HEK293T (cell line): ENCODE measurements at regions of chr9 and their contacts with region 1.

Region 1: DNA sequence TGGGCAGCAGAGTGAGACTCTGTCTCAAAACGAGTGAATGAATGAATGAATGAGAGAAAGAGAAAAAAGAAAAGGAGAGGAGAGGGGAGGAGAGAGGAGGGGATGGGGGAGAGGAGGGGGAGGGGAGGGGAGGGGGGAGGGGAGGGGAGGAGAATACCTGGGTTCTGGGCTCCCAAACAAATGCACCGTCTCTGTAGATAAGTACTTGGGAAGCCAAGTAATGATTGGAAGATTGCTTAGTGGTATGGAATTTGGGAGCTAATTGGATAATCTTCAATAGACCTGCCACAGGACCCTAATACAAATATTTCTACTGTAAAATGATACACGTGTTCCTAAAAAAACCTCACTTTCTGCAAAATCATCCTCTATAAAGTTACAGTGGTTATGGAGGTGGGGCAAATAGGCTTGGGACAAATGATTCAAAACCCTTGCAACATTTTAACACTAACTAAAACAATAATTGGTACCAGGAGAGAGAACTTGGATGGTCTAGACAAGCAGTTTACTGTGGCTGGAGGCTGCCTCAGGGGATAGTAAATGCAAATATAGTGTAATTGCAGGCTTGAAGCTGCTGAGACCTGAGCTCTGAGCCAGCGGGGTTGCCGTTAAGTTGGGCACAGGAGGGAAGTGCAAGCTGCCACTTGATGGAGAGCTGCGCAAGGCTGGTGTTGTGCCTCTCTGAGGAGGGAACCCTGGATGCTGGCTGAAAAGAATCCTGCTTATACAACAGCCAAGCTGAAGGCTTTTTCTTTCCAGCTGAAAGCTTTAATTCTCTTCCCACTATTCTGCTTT is 3.5 kb downstream of the HEMGN start:
- DNase-seq: peak; percentile 12

Region 2: GRCh38 chr9:97982683-97983588 is 48.4 kb after region 1 on chr9 and contains the start of gene ANP32B:
- CTCF ChIA-PET with region 1: no interaction called
- POLR2A ChIA-PET with region 1: interaction called, 12 read pairs
- DNase-seq: peak; percentile 88